ENCODE measurements at regions of chr17 and their contacts with region 1.

Region 1: DNA sequence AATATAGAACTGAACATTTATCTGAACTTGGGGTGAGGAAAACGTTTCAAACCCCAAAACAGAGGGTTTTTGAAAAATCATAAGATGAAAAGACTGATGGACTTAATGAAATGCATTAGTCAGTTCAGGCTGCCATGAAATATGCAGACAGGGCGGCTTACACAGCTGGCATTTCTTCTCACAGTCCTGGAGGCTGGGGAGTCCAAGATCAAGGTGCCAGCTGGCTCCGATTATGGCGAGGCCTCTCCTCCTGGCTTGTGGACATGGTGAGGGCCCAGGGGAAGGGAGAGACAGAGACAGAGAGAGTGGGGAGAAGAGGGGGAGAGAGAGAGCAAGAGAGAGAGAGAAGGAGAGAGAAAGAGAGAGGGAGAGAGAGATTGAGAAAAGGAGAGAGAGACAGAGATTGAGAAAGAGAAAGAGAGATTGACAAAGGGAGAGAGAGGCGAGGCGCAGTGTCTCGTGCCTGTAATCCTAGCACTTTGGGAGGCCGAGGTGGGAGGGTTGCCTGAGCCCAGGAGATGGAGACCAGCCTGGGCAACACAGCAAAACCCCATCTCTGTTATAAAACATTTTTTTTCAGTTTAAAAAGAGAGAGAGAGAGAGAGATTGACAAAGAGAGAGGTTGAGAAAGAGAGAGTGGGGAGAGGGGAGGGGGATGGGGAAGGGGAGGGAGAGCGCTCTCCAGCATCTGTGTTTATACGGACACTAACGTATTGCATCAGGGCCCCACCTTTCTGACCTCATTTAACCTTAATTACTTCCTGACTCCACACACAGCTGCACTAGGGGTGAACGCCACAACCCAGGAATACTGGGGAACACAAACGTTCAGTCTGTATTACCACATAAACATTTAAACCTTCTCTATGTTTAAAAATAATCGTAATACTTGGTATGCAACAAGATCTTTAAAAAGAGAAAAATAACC is 24.6 kb upstream of the RPH3AL start:
- DNase-seq: no peak

Region 2: DNA sequence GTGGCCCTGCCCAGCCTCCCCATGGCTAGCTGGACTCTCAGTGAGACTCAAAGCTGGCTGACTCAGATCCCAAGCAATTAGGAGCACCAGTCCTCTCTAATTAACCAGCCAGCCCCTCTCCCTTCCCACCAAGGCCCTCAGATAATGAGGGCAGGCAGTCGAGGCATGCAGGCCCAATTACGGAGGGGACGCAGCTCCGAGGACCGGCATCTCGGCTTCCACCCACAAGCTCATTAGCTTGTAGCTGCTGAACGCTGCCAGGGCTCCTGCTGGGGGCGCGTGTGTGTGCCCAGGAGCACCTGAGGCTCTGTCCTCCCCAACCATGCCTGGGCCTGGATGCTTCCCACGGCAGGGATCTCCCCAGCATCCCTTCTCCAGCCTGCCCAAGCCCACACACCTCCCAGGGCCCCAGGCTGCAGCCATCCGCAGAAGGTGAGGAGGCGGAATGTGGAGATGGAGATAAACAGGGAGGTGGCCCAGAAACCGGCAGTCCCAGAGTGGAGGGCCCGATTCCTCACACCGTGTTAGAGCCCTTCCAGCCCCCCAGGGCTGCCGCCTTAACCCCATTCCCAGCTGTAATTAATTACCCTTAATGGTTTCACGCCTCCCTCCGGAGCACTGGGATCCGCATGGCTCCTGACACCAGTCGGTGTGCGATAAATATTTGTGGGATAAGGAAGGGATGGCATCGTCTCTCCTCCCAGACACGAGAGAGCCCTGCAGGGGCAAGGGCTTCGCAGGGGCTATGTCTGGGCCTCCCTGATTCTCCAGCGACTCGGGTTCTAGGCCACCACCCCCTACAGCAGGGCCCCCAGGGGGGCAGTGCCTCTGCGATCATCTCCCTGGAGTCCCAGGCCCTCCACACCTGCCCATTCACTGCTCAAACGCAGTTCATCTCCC is 66.8 kb before region 1 on chr17:
- intact Hi-C with region 1: loop called (anchors 10 kb)
- DNase-seq: peak in 2 of 42 donors; percentile 4 to 29